Dendritic cell treated with granulocyte-macrophage colony-stimulating factor and Interleukin-4, amounts not matched to agents 40 ng/mL and 50 ng/mL, for 4 days (primary cell): ENCODE measurements at regions of chr16 and their contacts with region 1.

Region 1: DNA sequence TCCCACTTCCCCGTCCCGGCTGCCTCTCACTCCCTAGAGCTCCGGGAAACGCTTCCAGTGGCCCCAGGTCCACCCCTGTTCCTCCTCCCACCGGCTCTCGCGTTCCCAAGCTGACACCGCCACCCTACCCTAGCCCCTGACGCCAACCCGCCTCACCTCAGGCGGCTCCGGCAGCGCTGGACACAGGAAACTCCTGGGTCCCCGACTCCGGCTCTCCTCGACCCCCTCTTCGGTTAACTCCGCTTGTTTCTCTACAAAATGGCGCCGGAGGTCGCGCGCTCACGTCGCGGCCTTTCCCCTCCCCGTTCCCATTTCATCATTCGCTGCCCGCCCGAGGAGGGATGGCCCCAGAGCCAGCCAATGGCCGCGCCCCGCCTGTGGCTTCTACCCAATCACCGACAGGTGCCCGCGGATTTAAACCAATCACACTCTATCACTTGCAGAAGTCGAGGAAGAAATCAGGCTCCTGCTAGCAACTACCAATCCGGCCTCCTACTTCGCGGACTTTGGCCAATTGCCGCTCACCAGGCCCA is at the start of gene CNOT1:
- H3K4me3 Mint-ChIP-seq: peak within 1 kb of the TSS; percentile 100
- H3K27ac Mint-ChIP-seq: peak within 1 kb of the TSS; percentile 99
- H3K4me1 Mint-ChIP-seq: peaks cover 24% of the 10 kb centered on the region
- H3K27me3 Mint-ChIP-seq: no peaks in the 10 kb centered on the region

Region 2: DNA sequence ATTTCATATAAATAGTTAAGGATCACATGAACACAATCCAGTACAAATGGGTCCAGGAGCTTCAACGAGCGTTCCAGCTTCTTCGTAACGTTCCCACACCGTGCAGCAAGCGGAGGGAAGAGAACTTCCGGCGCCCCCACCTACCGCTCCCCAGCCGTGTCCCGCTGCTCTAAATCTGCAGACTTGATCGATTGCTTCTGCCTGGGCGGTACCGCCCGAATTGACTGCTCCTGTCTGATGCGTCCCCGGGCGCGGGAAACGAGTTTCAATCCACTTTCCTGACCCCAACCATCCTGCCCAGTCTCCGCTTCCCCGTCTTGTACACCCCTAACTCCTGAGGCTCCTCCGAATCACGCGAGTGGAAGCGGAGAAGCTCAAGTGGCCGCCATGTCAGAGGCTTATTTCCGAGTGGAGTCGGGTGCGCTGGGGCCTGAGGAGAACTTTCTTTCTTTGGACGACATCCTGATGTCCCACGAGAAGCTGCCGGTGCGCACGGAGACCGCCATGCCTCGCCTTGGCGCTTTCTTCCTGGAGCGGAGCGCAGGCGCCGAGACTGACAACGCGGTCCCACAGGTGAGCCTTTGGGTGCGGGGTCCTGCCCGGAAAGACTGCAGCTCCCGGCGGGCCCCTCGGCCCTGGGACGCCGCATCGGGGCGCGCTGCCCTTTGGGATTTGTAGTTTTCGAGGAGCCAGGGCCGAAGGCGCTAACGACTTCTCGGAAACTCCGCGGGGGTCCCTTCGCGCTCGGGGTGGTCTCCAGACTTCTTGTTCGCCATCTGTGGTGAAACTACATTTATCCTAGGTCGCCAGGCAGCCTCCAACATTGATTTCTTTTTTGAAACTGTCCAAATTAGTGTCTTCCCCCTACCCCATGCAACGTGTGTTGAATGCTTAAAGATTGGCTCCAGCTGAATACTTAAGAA is 237.2 kb before region 1 on chr16 and contains the start of gene GINS3:
- intact Hi-C with region 1: loop called (anchors 10 kb)
- H3K4me3 Mint-ChIP-seq: peak within 1 kb of the TSS; percentile 94
- H3K27ac Mint-ChIP-seq: peak within 1 kb of the TSS; percentile 90
- H3K4me1 Mint-ChIP-seq: peaks cover 6% of the 10 kb centered on the region
- H3K27me3 Mint-ChIP-seq: peaks cover 17% of the 10 kb centered on the region

Region 3: GRCh38 chr16:58741976-58742375 is 112.3 kb after region 1 on chr16:
- intact Hi-C with region 1: no loop called
- H3K4me3 Mint-ChIP-seq: no peak overlapping the region
- H3K27ac Mint-ChIP-seq: no peak overlapping the region
- H3K4me1 Mint-ChIP-seq: no peaks in the 10 kb centered on the region
- H3K27me3 Mint-ChIP-seq: peaks cover 8% of the 10 kb centered on the region